ENCODE measurements at regions of chr3 and their contacts with region 1.

Region 1: GRCh38 chr3:42683875-42684598 is 1.3 kb upstream of the KLHL40 start:
- DNase-seq: peak; percentile 81

Region 2: DNA sequence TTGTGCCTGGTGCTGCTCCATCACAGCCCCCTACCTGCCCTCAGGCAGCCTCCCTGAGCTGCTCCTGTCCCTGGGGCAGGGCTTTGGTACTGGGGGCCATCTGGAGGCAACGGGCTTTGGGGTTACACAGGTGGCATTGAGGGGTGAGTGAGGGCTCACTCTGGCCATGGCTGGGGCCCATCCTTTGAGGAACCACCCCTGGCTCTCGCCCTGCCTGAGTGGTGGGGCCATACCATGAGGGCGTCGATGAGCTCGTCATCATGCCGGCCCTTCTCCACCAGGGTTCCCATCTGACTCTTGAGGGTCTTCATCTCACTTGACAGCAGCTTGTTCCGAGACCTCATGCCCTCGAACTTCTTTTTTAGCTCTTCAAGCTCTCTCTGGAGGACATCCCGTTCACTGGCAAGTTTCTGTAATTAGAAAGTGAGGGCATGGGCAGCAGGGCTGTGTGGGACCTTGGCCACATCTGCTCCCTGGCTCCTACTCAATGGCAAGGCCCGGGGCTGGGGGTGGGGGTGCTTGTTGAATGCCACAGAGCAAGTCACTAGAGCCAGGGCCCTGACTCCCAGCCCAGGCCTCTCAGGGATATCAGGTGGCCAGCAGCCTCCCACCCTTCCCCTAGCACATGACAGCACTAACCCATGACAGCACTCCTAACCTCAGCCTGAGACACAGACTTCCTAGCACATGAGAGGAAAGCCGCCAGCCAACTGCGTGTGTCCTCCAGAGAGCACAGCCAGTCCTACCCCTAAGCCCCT is 55.5 kb after region 1 on chr3:
- intact Hi-C with region 1: loop called (anchors 1 kb)
- DNase-seq: peak; percentile 92

Region 3: DNA sequence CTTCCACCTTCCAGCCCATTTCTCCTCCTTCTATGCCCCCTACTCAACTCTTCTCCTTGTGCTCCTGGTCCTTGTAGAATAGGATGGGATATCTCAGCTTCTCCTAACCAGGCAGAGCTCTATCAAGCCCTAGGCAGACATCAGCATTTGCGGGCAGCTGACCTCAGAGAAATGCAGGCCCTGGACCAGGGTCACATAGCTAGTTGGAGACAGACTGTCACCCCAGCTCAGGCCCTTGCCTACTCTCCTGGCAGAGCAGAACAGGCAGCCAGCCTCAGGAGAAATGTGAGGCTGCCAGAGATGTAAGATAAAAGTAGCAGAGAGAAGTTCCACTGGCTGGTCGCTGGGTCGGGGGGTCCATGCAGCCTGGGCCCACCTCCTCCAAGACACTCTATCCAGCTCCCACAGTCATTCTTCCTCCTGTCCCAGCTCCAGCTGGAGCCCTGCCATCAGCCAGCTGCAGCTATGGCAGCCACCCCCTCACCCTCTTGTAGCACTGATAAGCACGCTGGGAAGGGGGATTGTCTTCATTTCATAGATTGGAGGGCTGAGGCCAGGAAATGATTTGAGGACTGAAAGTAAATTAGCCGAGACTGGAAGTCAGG is 187.7 kb after region 1 on chr3:
- intact Hi-C with region 1: no loop called
- DNase-seq: peak; percentile 82

Measured in cardiac septum (tissue), 1 donor.